Activated CD4-positive, alpha-beta T cell treated with anti-CD3 and anti-CD28 coated beads for 36 hours (primary cell): ENCODE measurements at regions of chr12 and their contacts with region 1.

Region 1: GRCh38 chr12:11347810-11348209 is 37.6 kb upstream of the PRB4 start:
- DNase-seq: no peak
- ATAC-seq: no peak
- H3K4me3 Mint-ChIP-seq: no peak overlapping the region
- H3K27ac Mint-ChIP-seq: no peak overlapping the region
- H3K4me1 Mint-ChIP-seq: no peaks in the 10 kb centered on the region
- H3K27me3 Mint-ChIP-seq: no peaks in the 10 kb centered on the region

Region 2: GRCh38 chr12:11397366-11397765 is 49.6 kb after region 1 on chr12:
- CTCF ChIA-PET with region 1: no interaction called
- POLR2A ChIA-PET with region 1: no interaction called
- intact Hi-C with region 1: loop called (anchors 1 to 2 kb)
- DNase-seq: no peak
- ATAC-seq: no peak
- H3K4me3 Mint-ChIP-seq: no peak overlapping the region
- H3K27ac Mint-ChIP-seq: no peak overlapping the region
- H3K4me1 Mint-ChIP-seq: no peaks in the 10 kb centered on the region
- H3K27me3 Mint-ChIP-seq: peaks cover 1% of the 10 kb centered on the region

Region 3: GRCh38 chr12:11408096-11408495 is 60.3 kb after region 1 on chr12:
- CTCF ChIA-PET with region 1: no interaction called
- POLR2A ChIA-PET with region 1: no interaction called
- intact Hi-C with region 1: loop called in 1 of 2 experiments (anchors 5 kb)
- DNase-seq: no peak
- ATAC-seq: no peak
- H3K4me3 Mint-ChIP-seq: no peak overlapping the region
- H3K27ac Mint-ChIP-seq: no peak overlapping the region
- H3K4me1 Mint-ChIP-seq: no peaks in the 10 kb centered on the region
- H3K27me3 Mint-ChIP-seq: no peaks in the 10 kb centered on the region